GM12878 (cell line): ENCODE measurements at regions of chr3 and their contacts with region 1.

Region 1: GRCh38 chr3:47522082-47522987 is 8.8 kb upstream of the ELP6 start:
- DNase-seq: peak; percentile 69
- ATAC-seq: peak; percentile 99
- H3K4me3 ChIP-seq: no peak overlapping the region
- H3K27ac ChIP-seq: no peak overlapping the region
- H3K4me1 ChIP-seq: peaks cover 6% of the 10 kb centered on the region; the same call in 1 of the 2 replicates
- H3K27me3 ChIP-seq: no peaks in the 10 kb centered on the region; a peak in 1 of 4 replicates
- CTCF ChIP-seq: peak; percentile 84 to 94 (median 85); a peak in 5 of 6 replicates
- EP300 ChIP-seq: no peak
- POLR2A ChIP-seq: no peak
- RAD21 ChIP-seq: peak; percentile 97

Region 2: DNA sequence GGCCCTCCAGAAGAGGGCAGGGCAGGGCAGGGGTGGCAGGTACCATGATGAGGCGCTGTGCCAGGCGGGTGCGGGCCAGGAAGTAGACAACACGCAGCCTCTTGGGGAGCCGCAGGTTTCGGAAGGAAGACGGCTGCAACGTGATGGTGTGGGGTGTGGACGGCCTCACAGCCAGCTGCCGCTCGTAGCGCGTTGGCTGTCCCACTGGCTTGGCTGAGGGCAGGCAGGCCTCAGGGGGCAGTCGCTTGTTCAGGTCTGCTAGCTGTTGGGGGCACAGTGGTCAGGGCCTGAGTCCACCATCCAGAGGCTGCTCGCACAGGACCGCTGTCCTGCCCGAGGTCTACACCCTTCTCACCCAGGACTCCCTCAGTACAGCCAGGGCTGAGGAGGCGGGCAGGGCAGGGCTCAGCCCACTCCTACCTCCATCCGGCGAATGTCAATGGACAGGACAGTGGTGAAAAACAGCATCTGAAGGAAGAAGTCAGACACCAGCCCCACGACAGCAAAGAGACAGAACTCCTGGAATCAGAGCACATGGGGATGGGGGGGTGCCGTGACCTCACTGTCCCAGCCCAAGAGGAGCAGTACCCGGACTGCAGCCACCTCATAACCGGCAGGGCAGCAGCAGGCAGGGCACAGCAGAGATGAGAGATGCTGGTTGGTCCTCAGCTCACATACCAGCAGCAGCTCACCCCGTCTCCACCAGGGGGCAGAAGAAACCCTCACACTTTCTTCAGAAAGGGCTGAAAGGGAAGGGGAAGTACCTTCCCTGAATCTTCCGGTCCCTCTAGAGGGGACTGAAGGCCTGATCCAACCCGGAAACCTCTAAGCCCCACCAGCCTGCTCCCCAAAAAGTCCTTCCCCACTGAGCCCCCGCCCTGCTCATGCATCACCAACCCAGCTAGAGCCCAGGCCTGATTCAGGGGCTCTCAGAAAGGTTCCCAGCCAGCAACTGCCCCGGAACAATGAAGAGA is 101.5 kb before region 1 on chr3:
- CTCF ChIA-PET with region 1: interaction called, 53 read pairs
- POLR2A ChIA-PET with region 1: no interaction called
- RAD21 ChIA-PET with region 1: interaction called, 4 read pairs
- SMC1A ChIA-PET with region 1: interaction called, 12 read pairs
- in situ Hi-C with region 1: no loop called
- intact Hi-C with region 1: no loop called
- DNase-seq: peak; percentile 65
- ATAC-seq: peak; percentile 97
- H3K4me3 ChIP-seq: no peak overlapping the region
- H3K27ac ChIP-seq: peak overlapping the region; percentile 81
- H3K4me1 ChIP-seq: peaks cover 3% of the 10 kb centered on the region; the same call in 1 of the 2 replicates
- H3K27me3 ChIP-seq: no peaks in the 10 kb centered on the region
- CTCF ChIP-seq: peak; percentile 94 to 96 (median 96)
- EP300 ChIP-seq: no peak
- POLR2A ChIP-seq: no peak
- RAD21 ChIP-seq: peak; percentile 89

Region 3: DNA sequence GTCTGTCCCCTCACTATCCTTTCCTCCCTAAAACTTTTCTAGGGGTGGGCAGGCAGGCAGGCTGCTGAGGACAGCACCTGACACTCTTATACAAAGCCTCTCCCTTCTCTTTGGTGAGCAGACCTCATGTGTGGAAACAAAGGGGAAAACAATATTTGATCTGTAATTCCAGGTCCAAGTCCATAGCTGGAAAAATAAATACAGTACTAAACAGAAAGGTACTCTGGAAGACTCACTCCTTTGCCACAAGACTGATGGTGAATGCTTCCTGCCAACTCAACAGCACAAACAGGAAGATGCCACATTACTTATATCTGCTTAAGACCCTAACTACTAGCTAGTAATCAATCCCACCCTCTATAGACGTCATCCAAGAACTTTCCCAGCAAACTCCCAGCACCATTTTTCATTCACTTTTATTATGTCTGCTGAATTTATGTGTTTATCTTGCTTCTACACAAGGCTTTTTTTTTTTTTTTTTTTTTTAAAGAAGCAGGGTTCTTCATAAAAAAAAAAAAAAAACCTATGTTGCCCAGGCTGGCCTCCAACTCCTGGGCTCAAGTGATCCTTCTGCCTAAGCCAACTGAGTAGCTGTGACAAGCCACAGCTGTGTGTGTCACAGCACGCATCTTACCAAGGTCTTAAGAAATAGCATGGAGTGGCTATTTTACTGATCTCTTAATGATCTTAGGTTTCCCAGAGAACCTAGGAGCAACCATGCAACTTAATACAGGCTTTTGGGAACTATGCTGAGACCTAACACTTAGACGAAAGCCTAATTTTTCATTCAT is 100.5 kb after region 1 on chr3:
- CTCF ChIA-PET with region 1: interaction called, 10 read pairs
- POLR2A ChIA-PET with region 1: no interaction called
- RAD21 ChIA-PET with region 1: interaction called, 4 read pairs
- SMC1A ChIA-PET with region 1: interaction called, 3 read pairs
- in situ Hi-C with region 1: no loop called
- intact Hi-C with region 1: no loop called
- DNase-seq: no peak
- ATAC-seq: no peak
- H3K4me3 ChIP-seq: no peak overlapping the region
- H3K27ac ChIP-seq: no peak overlapping the region
- H3K4me1 ChIP-seq: no peaks in the 10 kb centered on the region
- H3K27me3 ChIP-seq: no peaks in the 10 kb centered on the region
- CTCF ChIP-seq: no peak
- EP300 ChIP-seq: no peak
- POLR2A ChIP-seq: no peak
- RAD21 ChIP-seq: no peak

Region 4: GRCh38 chr3:47781685-47782445 is 259.5 kb after region 1 on chr3 and contains the start of gene SMARCC1:
- CTCF ChIA-PET with region 1: interaction called, 83 read pairs
- POLR2A ChIA-PET with region 1: interaction called, 5 read pairs
- RAD21 ChIA-PET with region 1: interaction called, 43 read pairs
- SMC1A ChIA-PET with region 1: interaction called, 6 read pairs
- in situ Hi-C with region 1: loop called (anchors 5 kb)
- intact Hi-C with region 1: no loop called
- DNase-seq: peak; percentile 94
- ATAC-seq: peak; percentile 86
- H3K4me3 ChIP-seq: peak within 1 kb of the TSS; percentile 94
- H3K27ac ChIP-seq: peak within 1 kb of the TSS; percentile 97
- H3K4me1 ChIP-seq: peaks cover 5% of the 10 kb centered on the region
- H3K27me3 ChIP-seq: no peaks in the 10 kb centered on the region
- CTCF ChIP-seq: 0 out of 6 replicates have a peak, but pooled peaks of 1 of the 3 experiments have one; percentile 6
- EP300 ChIP-seq: peak; percentile 41 to 73; a peak in 2 of 4 replicates
- POLR2A ChIP-seq: peak; percentile 96
- RAD21 ChIP-seq: no peak
- polyA plus RNA-seq, gene SMARCC1: 26.6 to 29.2 TPM

Region 5: GRCh38 chr3:47802734-47803477 is 280.6 kb after region 1 on chr3 and contains the start of gene DHX30:
- CTCF ChIA-PET with region 1: interaction called, 24 read pairs
- POLR2A ChIA-PET with region 1: no interaction called
- RAD21 ChIA-PET with region 1: interaction called, 10 read pairs
- SMC1A ChIA-PET with region 1: interaction called, 12 read pairs
- in situ Hi-C with region 1: no loop called
- intact Hi-C with region 1: no loop called
- DNase-seq: no peak
- ATAC-seq: peak; percentile 97
- H3K4me3 ChIP-seq: peak within 1 kb of the TSS; percentile 92
- H3K27ac ChIP-seq: peak within 1 kb of the TSS; percentile 74
- H3K4me1 ChIP-seq: peaks cover 11% of the 10 kb centered on the region
- H3K27me3 ChIP-seq: no peaks in the 10 kb centered on the region
- CTCF ChIP-seq: no peak
- EP300 ChIP-seq: no peak
- POLR2A ChIP-seq: peak; percentile 78
- RAD21 ChIP-seq: no peak
- polyA plus RNA-seq, gene DHX30: 9.5 to 12.6 TPM

Region 6: GRCh38 chr3:47989981-47990440 is 467.7 kb after region 1 on chr3:
- CTCF ChIA-PET with region 1: interaction called, 11 read pairs
- POLR2A ChIA-PET with region 1: no interaction called
- RAD21 ChIA-PET with region 1: interaction called, 14 read pairs
- SMC1A ChIA-PET with region 1: interaction called, 6 read pairs
- in situ Hi-C with region 1: no loop called
- intact Hi-C with region 1: loop called (anchors 5 kb)
- DNase-seq: peak; percentile 37
- ATAC-seq: peak; percentile 98
- H3K4me3 ChIP-seq: no peak overlapping the region
- H3K27ac ChIP-seq: no peak overlapping the region
- H3K4me1 ChIP-seq: no peaks in the 10 kb centered on the region
- H3K27me3 ChIP-seq: no peaks in the 10 kb centered on the region
- CTCF ChIP-seq: peak; percentile 81 to 91 (median 90); a peak in 5 of 6 replicates
- EP300 ChIP-seq: no peak
- POLR2A ChIP-seq: no peak
- RAD21 ChIP-seq: peak; percentile 97